Activated CD4-positive, alpha-beta T cell treated with anti-CD3 and anti-CD28 coated beads for 36 hours (primary cell): ENCODE measurements at regions of chr6 and their contacts with region 1.

Region 1: DNA sequence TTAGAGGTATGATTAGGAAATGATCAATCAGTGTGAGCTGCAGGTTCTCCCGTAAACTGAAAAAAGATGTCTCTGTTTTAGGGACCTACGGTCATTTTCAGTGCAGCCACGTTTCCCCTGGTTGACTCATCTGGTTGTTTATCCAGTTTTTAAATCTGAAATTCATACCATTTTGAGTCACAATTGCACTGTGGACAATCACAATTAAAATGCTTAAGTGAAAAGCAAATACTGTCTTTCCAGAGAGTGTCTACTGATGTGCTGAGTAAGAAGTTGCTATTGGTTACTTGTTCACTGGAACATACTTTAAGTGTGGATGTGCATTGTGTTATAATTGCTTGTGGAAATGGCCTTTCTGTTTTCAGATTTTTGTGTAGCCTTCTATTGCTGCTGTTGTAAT is 305.1 kb upstream of the SASH1 start:
- DNase-seq: no peak
- ATAC-seq: no peak
- H3K4me3 Mint-ChIP-seq: no peak overlapping the region
- H3K27ac Mint-ChIP-seq: no peak overlapping the region
- H3K4me1 Mint-ChIP-seq: no peaks in the 10 kb centered on the region
- H3K27me3 Mint-ChIP-seq: no peaks in the 10 kb centered on the region

Region 2: DNA sequence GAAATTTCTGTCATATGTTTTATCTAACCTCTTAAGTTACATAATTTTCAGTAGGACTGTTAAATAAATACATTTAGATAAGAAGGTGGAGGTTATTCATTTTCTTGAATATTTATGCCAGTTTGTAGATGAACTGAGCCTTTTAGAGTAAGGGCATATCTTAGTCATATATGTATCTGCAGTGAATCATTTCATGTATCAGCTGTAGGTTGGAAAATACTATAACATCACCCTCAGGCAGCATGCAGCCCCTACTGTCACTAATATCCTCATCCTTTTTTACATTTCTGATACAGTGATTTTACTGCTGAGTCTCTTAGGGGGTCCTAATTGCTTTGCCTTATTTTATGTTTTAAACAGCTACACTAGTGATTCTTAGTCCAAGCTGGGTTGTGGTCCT is 1343.0 kb after region 1 on chr6:
- CTCF ChIA-PET with region 1: no interaction called
- POLR2A ChIA-PET with region 1: interaction called, 10 read pairs
- intact Hi-C with region 1: no loop called
- DNase-seq: peak; percentile 31
- ATAC-seq: peak; percentile 97
- H3K4me3 Mint-ChIP-seq: no peak overlapping the region
- H3K27ac Mint-ChIP-seq: no peak overlapping the region
- H3K4me1 Mint-ChIP-seq: peaks cover 68% of the 10 kb centered on the region
- H3K27me3 Mint-ChIP-seq: no peaks in the 10 kb centered on the region